GM12878 (cell line): ENCODE measurements at regions of chr10 and their contacts with region 1.

Region 1: GRCh38 chr10:89701238-89702120 is at the start of gene KIF20B:
- DNase-seq: peak; percentile 88
- ATAC-seq: peak; percentile 95
- H3K4me3 ChIP-seq: peak within 1 kb of the TSS; percentile 77
- H3K27ac ChIP-seq: peak within 1 kb of the TSS; percentile 83
- H3K4me1 ChIP-seq: peaks cover 4% of the 10 kb centered on the region; the same call in 1 of the 2 replicates
- H3K27me3 ChIP-seq: no peaks in the 10 kb centered on the region
- CTCF ChIP-seq: peak; percentile 23 to 64 (median 40); a peak in 4 of 6 replicates
- EP300 ChIP-seq: no peak
- POLR2A ChIP-seq: peak; percentile 95
- RAD21 ChIP-seq: peak; percentile 62
- polyA plus RNA-seq, gene KIF20B: 28.2 to 59.4 TPM

Region 2: DNA sequence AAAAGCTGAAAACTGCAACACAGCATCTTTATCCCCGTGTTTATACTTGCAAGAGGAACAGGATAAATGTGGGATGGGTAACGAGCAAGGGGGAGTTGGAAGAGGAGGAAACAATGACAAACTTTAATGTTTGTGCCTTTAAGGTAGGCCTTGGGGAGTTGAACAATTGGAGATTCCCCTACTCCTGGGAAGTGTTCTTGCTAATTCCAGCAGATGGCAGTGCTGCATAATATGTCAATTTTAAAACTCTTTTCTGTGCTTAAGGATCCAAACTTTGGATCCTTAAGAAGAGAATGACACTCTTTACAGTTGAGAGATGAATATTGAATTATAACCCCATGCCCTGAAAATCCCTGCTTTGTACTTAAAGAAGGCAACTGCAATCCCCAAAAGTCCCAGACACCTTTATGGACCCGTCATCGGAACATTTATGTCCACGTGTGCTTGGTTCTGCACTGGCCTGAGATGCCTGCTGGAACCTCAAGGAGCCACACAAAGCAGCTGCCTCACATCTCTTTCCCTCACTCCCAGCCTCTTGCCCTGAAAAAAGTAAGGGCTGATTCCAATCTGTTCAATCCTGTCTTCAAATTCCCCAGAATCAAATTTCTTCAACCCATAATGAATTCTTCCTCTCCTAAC is 275.1 kb before region 1 on chr10:
- CTCF ChIA-PET with region 1: interaction called, 3 read pairs
- POLR2A ChIA-PET with region 1: no interaction called
- RAD21 ChIA-PET with region 1: no interaction called
- SMC1A ChIA-PET with region 1: no interaction called
- in situ Hi-C with region 1: no loop called
- intact Hi-C with region 1: loop called (anchors 10 kb)
- DNase-seq: no peak
- ATAC-seq: peak; percentile 87
- H3K4me3 ChIP-seq: no peak overlapping the region
- H3K27ac ChIP-seq: no peak overlapping the region
- H3K4me1 ChIP-seq: no peaks in the 10 kb centered on the region
- H3K27me3 ChIP-seq: no peaks in the 10 kb centered on the region
- CTCF ChIP-seq: peak; percentile 66 to 85 (median 79); a peak in 4 of 6 replicates
- EP300 ChIP-seq: no peak
- POLR2A ChIP-seq: no peak
- RAD21 ChIP-seq: peak; percentile 86

Region 3: DNA sequence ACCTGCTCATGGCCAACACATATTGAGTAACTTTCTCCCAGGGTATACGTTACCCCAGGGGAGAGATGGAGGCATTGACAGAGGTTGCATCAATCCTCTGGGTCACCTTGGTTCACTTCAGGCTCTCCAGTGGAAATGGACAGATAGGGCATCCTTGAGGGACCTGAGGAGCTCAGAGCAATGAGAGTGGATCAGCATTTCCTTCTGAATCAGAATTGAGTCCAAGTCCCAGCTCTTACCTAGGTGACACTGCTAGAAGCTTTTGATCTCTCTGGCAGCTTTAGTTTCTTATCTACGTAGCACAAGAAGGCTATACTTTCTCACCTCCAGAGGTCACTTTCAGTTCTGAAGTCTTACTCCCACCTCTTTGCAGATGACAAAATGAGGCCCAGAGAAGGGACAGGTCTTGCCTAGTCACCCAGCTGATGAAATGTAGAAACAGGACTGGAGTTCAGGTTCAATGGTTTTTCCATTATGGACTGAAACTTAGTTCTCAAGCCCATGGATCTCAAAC is 91.6 kb before region 1 on chr10:
- CTCF ChIA-PET with region 1: interaction called, 6 read pairs
- POLR2A ChIA-PET with region 1: interaction called, 3 read pairs
- RAD21 ChIA-PET with region 1: interaction called, 16 read pairs
- SMC1A ChIA-PET with region 1: interaction called, 5 read pairs
- in situ Hi-C with region 1: no loop called
- intact Hi-C with region 1: no loop called
- DNase-seq: peak; percentile 37
- ATAC-seq: peak; percentile 98
- H3K4me3 ChIP-seq: no peak overlapping the region
- H3K27ac ChIP-seq: no peak overlapping the region; the same call in 1 of the 2 replicates
- H3K4me1 ChIP-seq: peaks cover 12% of the 10 kb centered on the region
- H3K27me3 ChIP-seq: no peaks in the 10 kb centered on the region
- CTCF ChIP-seq: peak; percentile 26 to 29 (median 26); a peak in 5 of 6 replicates
- EP300 ChIP-seq: 0 out of 4 replicates have a peak, but pooled peaks of 1 of the 2 experiments have one; percentile 24
- POLR2A ChIP-seq: no peak
- RAD21 ChIP-seq: peak; percentile 67

Region 4: DNA sequence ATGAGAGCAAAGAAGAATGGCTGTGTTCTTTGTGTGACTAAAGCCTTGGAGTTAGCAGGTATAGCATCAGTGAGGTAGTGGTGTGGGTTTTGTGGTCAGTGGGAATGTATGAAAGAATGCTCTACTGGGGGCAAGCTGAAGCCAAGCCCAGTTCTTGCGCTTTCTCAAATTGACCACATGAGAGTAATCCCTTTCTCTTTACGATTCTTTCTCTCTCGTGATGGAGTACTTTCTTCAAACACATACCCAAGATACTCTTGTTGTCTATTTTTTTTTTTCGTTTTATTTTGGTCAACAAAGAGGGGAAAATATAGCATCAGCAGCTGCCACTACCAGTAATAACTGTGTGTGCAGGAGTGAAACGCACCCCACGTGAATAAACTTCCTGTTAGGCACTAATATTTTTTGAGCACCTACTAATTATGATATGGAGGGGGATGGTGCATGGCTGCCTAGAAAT is 48.0 kb before region 1 on chr10:
- CTCF ChIA-PET with region 1: interaction called, 6 read pairs
- POLR2A ChIA-PET with region 1: interaction called, 5 read pairs
- RAD21 ChIA-PET with region 1: interaction called, 7 read pairs
- SMC1A ChIA-PET with region 1: interaction called, 4 read pairs
- in situ Hi-C with region 1: no loop called
- intact Hi-C with region 1: loop called (anchors 1 kb)
- DNase-seq: peak; percentile 65
- ATAC-seq: peak; percentile 87
- H3K4me3 ChIP-seq: no peak overlapping the region
- H3K27ac ChIP-seq: peak overlapping the region; percentile 30
- H3K4me1 ChIP-seq: peaks cover 23% of the 10 kb centered on the region
- H3K27me3 ChIP-seq: no peaks in the 10 kb centered on the region
- CTCF ChIP-seq: no peak
- EP300 ChIP-seq: peak; percentile 83 to 84
- POLR2A ChIP-seq: no peak
- RAD21 ChIP-seq: no peak

Region 5: DNA sequence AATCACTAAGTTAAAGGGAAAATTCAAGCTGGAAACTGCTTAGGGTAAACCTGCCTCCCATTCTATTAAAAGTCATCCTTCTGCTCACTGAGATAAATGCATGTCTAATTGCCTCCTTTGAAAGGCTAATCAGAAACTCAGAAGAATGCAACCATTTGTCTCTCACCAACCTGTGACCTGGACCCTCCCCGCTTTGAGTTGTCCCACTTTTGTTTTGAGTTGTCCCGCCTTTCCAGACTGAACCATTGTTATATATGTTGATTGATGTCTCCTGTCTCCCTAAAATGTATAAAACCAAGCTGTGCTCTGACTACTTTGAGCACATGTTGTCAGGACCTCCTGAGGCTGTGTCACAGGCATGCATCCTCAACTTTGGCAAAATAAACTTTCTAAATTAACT is 378.3 kb after region 1 on chr10:
- CTCF ChIA-PET with region 1: no interaction called
- POLR2A ChIA-PET with region 1: no interaction called
- RAD21 ChIA-PET with region 1: no interaction called
- SMC1A ChIA-PET with region 1: no interaction called
- in situ Hi-C with region 1: no loop called
- intact Hi-C with region 1: no loop called
- DNase-seq: no peak
- ATAC-seq: no peak
- H3K4me3 ChIP-seq: no peak overlapping the region
- H3K27ac ChIP-seq: no peak overlapping the region
- H3K4me1 ChIP-seq: no peaks in the 10 kb centered on the region
- H3K27me3 ChIP-seq: no peaks in the 10 kb centered on the region
- CTCF ChIP-seq: no peak
- EP300 ChIP-seq: no peak
- POLR2A ChIP-seq: no peak
- RAD21 ChIP-seq: no peak

Region 6: GRCh38 chr10:90602862-90603610 is 901.6 kb after region 1 on chr10:
- CTCF ChIA-PET with region 1: no interaction called
- POLR2A ChIA-PET with region 1: no interaction called
- RAD21 ChIA-PET with region 1: no interaction called
- SMC1A ChIA-PET with region 1: no interaction called
- in situ Hi-C with region 1: no loop called
- intact Hi-C with region 1: no loop called
- DNase-seq: no peak
- ATAC-seq: no peak
- H3K4me3 ChIP-seq: no peak overlapping the region
- H3K27ac ChIP-seq: no peak overlapping the region
- H3K4me1 ChIP-seq: no peaks in the 10 kb centered on the region
- H3K27me3 ChIP-seq: no peaks in the 10 kb centered on the region
- CTCF ChIP-seq: no peak
- EP300 ChIP-seq: no peak
- POLR2A ChIP-seq: no peak
- RAD21 ChIP-seq: no peak